Sigmoid colon (tissue), 7 donors: ENCODE measurements at regions of chr4 and their contacts with region 1.

Region 1: GRCh38 chr4:56544573-56545131 is 39.1 kb downstream of the ARL9 start:
- DNase-seq: peak; percentile 93
- H3K4me3 ChIP-seq: peak overlapping the region; percentile 26 to 44 (median 35)
- H3K27ac ChIP-seq: peak overlapping the region in 3 of 4 donors; percentile 28 to 57 (median 54)
- H3K4me1 ChIP-seq: peaks cover 0 to 13% (median 6%) of the 10 kb centered on the region in 4 donors
- H3K27me3 ChIP-seq: no peaks in the 10 kb centered on the region
- CTCF ChIP-seq: peak; percentile 83 to 97 (median 89)
- EP300 ChIP-seq: no peak
- POLR2A ChIP-seq: no peak

Region 2: DNA sequence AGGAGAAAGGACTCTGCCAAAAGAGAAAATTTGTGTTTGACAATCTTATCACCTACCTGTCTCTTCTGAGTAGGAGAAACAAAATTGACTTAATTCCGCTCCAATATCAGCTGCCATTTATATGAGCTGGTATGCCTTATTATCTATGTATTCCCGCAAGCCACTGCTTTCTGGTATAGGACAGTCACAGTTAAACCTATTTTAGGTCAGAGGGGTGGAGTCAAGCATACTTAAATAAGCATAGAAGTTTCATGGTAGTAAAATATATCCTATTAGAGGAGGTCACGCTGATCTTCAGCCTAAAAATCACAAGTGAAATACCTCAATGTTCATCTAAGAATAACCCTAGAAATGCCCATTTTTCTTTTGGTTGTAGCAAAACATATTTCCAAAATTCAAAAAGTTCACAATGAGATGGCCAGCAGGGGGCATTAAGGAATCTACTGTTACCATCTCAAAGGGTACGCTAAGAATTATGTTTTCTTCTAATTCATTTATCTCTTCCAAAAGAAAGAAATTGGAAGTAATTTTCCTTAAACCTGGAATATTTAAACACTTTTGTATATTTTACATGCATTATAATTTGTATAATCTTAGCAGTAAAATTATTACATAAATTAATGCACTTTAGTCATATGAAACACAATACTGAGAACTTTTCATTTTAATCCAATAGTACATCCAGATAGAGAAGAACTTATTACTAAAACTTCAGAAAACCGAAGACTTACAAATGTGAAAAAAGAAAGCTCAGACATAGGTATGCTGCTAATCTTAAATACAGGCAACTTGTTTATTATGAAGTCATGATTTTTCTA is 119.7 kb before region 1 on chr4:
- intact Hi-C with region 1: loop called (anchors 1 kb)
- DNase-seq: no peak
- H3K4me3 ChIP-seq: no peak overlapping the region
- H3K27ac ChIP-seq: no peak overlapping the region
- H3K4me1 ChIP-seq: no peaks in the 10 kb centered on the region
- H3K27me3 ChIP-seq: no peaks in the 10 kb centered on the region
- CTCF ChIP-seq: peak in 3 of 4 experiments; percentile 34 to 60 (median 41)
- EP300 ChIP-seq: no peak
- POLR2A ChIP-seq: no peak

Region 3: GRCh38 chr4:56505269-56506130 is 39.2 kb before region 1 on chr4 and contains the start of gene ARL9:
- intact Hi-C with region 1: loop called (anchors 2 kb)
- DNase-seq: peak; percentile 78
- H3K4me3 ChIP-seq: peak within 1 kb of the TSS; percentile 41 to 62 (median 58)
- H3K27ac ChIP-seq: peak within 1 kb of the TSS; percentile 62 to 73 (median 64)
- H3K4me1 ChIP-seq: peaks cover 0 to 18% (median 12%) of the 10 kb centered on the region in 4 donors
- H3K27me3 ChIP-seq: no peaks in the 10 kb centered on the region
- CTCF ChIP-seq: no peak
- EP300 ChIP-seq: no peak
- POLR2A ChIP-seq: no peak
- total RNA-seq, gene ARL9: 0.54 to 1.1 (median 0.66) TPM in 3 of 4 donors, not detected in the other

Region 4: GRCh38 chr4:56511098-56511497 is 33.6 kb before region 1 on chr4:
- intact Hi-C with region 1: loop called (anchors 2 kb)
- DNase-seq: peak; percentile 89
- H3K4me3 ChIP-seq: no peak overlapping the region
- H3K27ac ChIP-seq: peak overlapping the region in 3 of 4 donors; percentile 25 to 76 (median 63)
- H3K4me1 ChIP-seq: peaks cover 0 to 28% (median 19%) of the 10 kb centered on the region in 4 donors
- H3K27me3 ChIP-seq: no peaks in the 10 kb centered on the region
- CTCF ChIP-seq: no peak
- EP300 ChIP-seq: no peak
- POLR2A ChIP-seq: no peak

Region 5: DNA sequence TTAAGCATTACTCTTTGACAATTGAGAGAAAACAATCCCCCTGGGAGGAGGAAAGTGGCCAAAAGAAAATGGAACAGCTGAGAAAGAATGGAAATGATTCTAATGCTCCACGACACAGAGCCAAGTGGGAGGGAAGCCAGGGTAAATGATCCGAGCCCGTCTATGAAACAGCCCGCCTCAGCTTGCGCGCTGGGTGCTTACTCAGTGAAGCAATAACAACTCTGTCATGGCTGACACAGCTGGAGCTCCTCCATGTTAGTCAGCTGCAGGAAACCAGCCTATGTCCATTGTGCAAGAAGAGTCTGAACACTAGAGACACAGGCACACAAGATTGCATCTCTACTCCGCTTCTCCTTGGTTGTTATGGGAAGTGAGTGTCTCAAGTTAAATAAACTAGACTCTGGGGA is 413.5 kb after region 1 on chr4:
- intact Hi-C with region 1: no loop called
- DNase-seq: peak; percentile 96
- H3K4me3 ChIP-seq: no peak overlapping the region
- H3K27ac ChIP-seq: peak overlapping the region; percentile 10 to 56 (median 47)
- H3K4me1 ChIP-seq: peaks cover 0 to 14% (median 11%) of the 10 kb centered on the region in 4 donors
- H3K27me3 ChIP-seq: no peaks in the 10 kb centered on the region
- CTCF ChIP-seq: no peak
- EP300 ChIP-seq: no peak
- POLR2A ChIP-seq: no peak